ENCODE measurements at regions of chr16 and their contacts with region 1.

Region 1: DNA sequence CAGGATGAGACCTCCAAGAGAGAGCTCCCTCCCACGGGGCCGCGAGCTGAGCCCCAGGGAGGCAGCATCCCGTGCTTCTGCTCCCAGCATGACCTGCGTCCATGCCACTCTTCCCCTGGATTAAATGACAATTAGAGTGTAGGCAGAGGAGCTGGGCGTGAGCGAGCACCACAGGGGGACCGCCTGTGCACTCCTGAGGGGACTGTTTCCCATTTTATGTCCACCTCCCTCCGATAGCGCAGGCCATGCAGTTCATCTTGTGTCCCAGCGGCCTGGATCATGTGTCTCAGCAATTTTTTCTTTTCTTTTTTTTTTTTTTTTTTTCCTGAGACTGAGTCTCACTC is 5.8 kb upstream of the IL17C start:
- DNase-seq: no peak
- ATAC-seq: no peak
- H3K4me3 ChIP-seq: no peak overlapping the region
- H3K4me3 Mint-ChIP-seq: peak overlapping the region in 2 of 3 donors; percentile 24 to 74
- H3K27ac ChIP-seq: no peak overlapping the region
- H3K27ac Mint-ChIP-seq: peak overlapping the region in 1 of 2 donors; percentile 34
- H3K4me1 ChIP-seq: peaks cover 15 to 46% of the 10 kb centered on the region in 2 experiments
- H3K4me1 Mint-ChIP-seq: peaks cover 12 to 30% (median 19%) of the 10 kb centered on the region in 3 donors
- H3K27me3 ChIP-seq: peaks cover 0 to 28% of the 10 kb centered on the region in 2 experiments
- H3K27me3 Mint-ChIP-seq: peaks cover 4% of the 10 kb centered on the region in 2 donors

Region 2: DNA sequence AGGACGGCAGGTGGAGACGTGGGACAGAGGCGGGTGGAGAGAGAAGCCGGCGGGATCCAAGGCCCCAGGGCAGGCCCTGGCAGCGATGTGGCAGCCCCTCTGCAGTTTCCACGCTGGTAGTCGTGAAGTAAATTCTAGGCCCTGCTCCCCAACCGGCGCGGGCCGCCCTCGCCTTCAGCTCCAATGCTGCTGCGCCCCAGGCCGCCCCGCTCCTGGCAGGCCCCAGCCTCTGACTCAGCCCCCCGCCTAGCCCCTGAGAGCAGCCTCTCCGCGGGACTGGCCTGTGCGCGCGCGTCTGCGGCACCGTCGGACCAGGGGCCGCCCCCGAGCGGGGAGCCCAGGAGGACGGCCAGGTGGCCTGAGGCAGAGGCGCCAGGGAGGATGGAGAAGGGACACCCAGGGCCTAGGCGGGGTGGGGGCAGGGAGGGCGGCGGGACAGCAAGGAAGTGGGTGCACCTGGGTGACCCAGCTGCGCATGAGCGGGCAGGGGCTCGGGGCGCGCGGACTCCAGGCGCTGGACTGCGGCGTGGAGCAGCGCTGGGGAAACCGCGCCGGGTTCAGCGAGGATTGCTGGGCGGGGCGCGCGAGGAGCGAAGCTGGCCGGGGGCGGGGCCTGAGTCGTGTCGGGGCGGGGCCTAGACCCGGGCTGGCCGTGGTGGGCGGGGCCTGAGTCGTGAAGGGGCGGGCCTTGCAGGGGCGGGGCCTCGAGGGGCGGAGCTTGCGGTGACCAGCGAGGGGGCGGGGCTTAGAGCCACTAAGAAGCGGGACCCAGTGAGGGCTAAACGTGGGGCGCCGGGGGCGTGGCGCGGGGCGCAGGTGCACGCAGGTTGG is 614.6 kb after region 1 on chr16:
- CTCF ChIA-PET with region 1: interaction called in 1 of 2 experiments, 10 read pairs
- POLR2A ChIA-PET with region 1: no interaction called
- DNase-seq: peak; percentile 81 to 98 (median 93)
- ATAC-seq: peak; percentile 86 to 96 (median 91)
- H3K4me3 ChIP-seq: peak overlapping the region; percentile 19 to 72
- H3K4me3 Mint-ChIP-seq: peak overlapping the region; percentile 64 to 71 (median 65)
- H3K27ac ChIP-seq: no peak overlapping the region
- H3K27ac Mint-ChIP-seq: peak overlapping the region in 1 of 2 donors; percentile 64
- H3K4me1 ChIP-seq: peaks cover 0 to 27% of the 10 kb centered on the region in 2 experiments
- H3K4me1 Mint-ChIP-seq: peaks cover 11 to 22% (median 21%) of the 10 kb centered on the region in 3 donors
- H3K27me3 ChIP-seq: peaks cover 0 to 3% of the 10 kb centered on the region in 2 experiments
- H3K27me3 Mint-ChIP-seq: no peaks in the 10 kb centered on the region